OCI-LY7 (cell line): ENCODE measurements at regions of chr5 and their contacts with region 1.

Region 1: DNA sequence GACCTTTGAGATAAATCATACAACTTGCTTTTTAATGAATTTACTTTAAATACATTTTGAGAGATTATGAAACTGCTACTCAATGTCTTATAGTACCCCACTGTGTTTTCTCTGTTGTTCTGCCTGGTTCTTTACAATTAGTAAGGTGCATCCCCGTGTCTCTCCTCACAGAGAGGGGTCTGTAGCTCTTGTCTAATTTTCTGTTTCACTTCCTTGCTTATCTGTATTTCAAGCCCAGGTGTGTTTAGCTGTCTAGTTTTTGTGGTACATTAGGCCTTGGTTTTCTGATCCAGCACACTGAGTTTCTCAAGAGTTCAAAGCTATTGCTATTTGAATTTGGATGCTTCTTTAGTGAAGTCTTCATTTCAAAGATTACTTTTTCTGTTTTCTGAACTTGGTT is 105.1 kb downstream of the MAST4 start:
- DNase-seq: peak; percentile 64
- H3K4me3 ChIP-seq: no peak overlapping the region
- H3K27ac ChIP-seq: peak overlapping the region; percentile 38
- H3K4me1 ChIP-seq: peaks cover 46% of the 10 kb centered on the region
- CTCF ChIP-seq: no peak

Region 2: GRCh38 chr5:66553916-66554575 is 147.2 kb before region 1 on chr5:
- CTCF ChIA-PET with region 1: no interaction called
- POLR2A ChIA-PET with region 1: no interaction called
- intact Hi-C with region 1: loop called (anchors 5 kb)
- DNase-seq: peak; percentile 82
- H3K4me3 ChIP-seq: peak overlapping the region; percentile 6
- H3K27ac ChIP-seq: peak overlapping the region; percentile 42
- H3K4me1 ChIP-seq: peaks cover 19% of the 10 kb centered on the region
- CTCF ChIP-seq: no peak

Region 3: GRCh38 chr5:66595756-66596635 is 105.2 kb before region 1 on chr5 and contains the start of gene MAST4:
- CTCF ChIA-PET with region 1: no interaction called
- POLR2A ChIA-PET with region 1: interaction called, 3 read pairs
- intact Hi-C with region 1: loop called (anchors 10 kb)
- DNase-seq: peak; percentile 83
- H3K4me3 ChIP-seq: peak within 1 kb of the TSS; percentile 73
- H3K27ac ChIP-seq: no peak within 1 kb of the TSS
- H3K4me1 ChIP-seq: no peaks in the 10 kb centered on the region
- CTCF ChIP-seq: no peak
- total RNA-seq, gene MAST4: 0.85 and 1.3 TPM in 2 replicates

Region 4: GRCh38 chr5:66621146-66621545 is 80.1 kb before region 1 on chr5:
- CTCF ChIA-PET with region 1: no interaction called
- POLR2A ChIA-PET with region 1: interaction called, 3 read pairs
- intact Hi-C with region 1: loop called (anchors 2 kb)
- DNase-seq: no peak
- H3K4me3 ChIP-seq: no peak overlapping the region
- H3K27ac ChIP-seq: no peak overlapping the region
- H3K4me1 ChIP-seq: peaks cover 37% of the 10 kb centered on the region
- CTCF ChIP-seq: no peak

Region 5: DNA sequence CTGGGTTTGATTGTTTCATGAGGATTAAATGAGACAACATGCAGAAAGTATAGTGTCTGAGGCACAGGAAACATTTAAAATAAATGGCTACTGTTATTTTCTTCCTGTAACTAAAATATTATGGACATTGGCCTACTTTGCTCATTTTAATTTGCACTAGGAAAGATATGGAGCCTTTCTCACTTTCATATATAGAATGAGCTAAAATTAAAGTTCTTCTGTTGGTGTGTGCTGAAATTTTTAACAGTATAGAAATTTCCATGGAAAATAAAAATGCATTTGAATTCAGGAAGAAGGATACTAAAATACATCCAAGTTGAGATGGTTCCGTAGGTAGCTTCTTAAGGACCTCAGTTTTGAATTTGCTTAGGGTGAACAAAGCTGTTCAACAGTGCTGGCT is 26.8 kb after region 1 on chr5:
- CTCF ChIA-PET with region 1: no interaction called
- POLR2A ChIA-PET with region 1: interaction called, 10 read pairs
- intact Hi-C with region 1: no loop called
- DNase-seq: no peak
- H3K4me3 ChIP-seq: no peak overlapping the region
- H3K27ac ChIP-seq: no peak overlapping the region
- H3K4me1 ChIP-seq: no peaks in the 10 kb centered on the region
- CTCF ChIP-seq: no peak

Region 6: GRCh38 chr5:66840511-66841013 is 139.3 kb after region 1 on chr5:
- CTCF ChIA-PET with region 1: no interaction called
- POLR2A ChIA-PET with region 1: no interaction called
- intact Hi-C with region 1: no loop called
- DNase-seq: no peak
- H3K4me3 ChIP-seq: no peak overlapping the region
- H3K27ac ChIP-seq: no peak overlapping the region
- H3K4me1 ChIP-seq: no peaks in the 10 kb centered on the region
- CTCF ChIP-seq: no peak

Region 7: DNA sequence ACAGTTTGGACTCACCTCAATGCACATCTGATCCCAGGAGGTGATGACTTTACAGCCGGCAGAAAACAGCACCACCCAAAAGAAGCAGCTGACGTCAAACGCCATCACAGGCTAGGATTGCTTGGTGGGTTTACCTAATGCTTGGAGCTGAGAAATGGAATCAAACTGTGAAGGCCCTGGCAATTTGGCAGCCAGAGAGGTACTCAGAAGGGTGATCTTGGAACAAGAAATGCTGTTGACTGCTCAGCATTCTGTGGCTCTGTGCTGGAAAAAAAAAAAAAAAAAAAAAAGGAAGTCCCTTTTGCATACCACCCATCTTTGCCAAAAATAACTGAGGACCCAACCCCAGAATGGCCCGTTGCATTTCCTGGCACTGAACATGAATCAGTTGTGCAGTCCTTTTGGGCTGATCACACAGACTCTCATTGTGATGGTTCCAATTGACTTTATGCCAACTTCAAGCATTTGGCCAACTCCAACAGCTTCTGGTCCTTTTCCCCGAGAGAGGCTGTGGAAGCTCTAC is 495.4 kb after region 1 on chr5 and contains the start of gene CD180:
- CTCF ChIA-PET with region 1: no interaction called
- POLR2A ChIA-PET with region 1: no interaction called
- intact Hi-C with region 1: loop called (anchors 10 kb)
- DNase-seq: peak; percentile 80
- H3K4me3 ChIP-seq: peak within 1 kb of the TSS; percentile 69
- H3K27ac ChIP-seq: peak within 1 kb of the TSS; percentile 75
- H3K4me1 ChIP-seq: peaks cover 91% of the 10 kb centered on the region
- CTCF ChIP-seq: no peak
- total RNA-seq, gene CD180: 11.1 and 14.4 TPM in 2 replicates